ENCODE measurements at regions of chr11 and their contacts with region 1.

Region 1: GRCh38 chr11:10933455-10934292 is 75.8 kb upstream of the ZBED5 start:
- DNase-seq: peak; percentile 83 to 94 (median 92)
- H3K4me3 ChIP-seq: peak overlapping the region in 58 of 59 donors; percentile 17 to 69 (median 42)
- H3K27ac ChIP-seq: peak overlapping the region in 35 of 59 donors; percentile 6 to 96 (median 61)
- H3K27me3 ChIP-seq: no peaks in the 10 kb centered on the region
- CTCF ChIP-seq: peak; percentile 68 to 100 (median 98)

Region 2: DNA sequence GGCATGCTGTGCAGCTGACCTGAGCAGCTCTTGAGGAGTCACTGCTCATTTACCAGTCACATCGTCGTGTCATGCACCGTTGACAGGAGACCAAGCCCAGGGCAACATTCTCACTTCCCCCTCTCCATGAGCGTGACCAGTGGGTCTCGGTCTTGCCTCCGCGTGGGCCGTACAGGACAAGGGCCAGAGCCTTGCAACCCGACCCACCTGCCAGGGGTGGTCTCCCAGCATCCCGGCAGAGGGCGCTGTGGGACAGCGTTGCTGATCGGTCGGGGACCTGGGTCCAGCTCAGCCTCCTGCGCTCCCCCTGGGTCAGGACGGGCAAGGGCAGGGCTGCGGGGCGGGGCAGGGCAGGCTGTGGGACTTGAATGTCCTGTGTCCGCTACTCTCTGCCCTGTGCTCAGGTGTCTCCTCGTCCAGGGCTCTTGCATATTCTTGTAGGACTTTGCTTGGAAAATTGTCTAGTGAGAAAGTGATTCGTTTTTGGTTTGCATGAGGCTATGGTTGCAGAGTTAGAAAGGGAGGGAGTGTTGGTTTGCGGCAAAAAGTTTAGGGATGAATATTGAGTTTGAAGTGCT is 141.2 kb before region 1 on chr11:
- intact Hi-C with region 1: loop called in 1 of 2 experiments (anchors 5 kb)
- DNase-seq: peak; percentile 47 to 83 (median 68)
- H3K4me3 ChIP-seq: peak overlapping the region in 27 of 59 donors; percentile 4 to 51 (median 29)
- H3K27ac ChIP-seq: no peak overlapping the region
- H3K27me3 ChIP-seq: no peaks in the 10 kb centered on the region
- CTCF ChIP-seq: peak; percentile 33 to 91 (median 84)

Region 3: DNA sequence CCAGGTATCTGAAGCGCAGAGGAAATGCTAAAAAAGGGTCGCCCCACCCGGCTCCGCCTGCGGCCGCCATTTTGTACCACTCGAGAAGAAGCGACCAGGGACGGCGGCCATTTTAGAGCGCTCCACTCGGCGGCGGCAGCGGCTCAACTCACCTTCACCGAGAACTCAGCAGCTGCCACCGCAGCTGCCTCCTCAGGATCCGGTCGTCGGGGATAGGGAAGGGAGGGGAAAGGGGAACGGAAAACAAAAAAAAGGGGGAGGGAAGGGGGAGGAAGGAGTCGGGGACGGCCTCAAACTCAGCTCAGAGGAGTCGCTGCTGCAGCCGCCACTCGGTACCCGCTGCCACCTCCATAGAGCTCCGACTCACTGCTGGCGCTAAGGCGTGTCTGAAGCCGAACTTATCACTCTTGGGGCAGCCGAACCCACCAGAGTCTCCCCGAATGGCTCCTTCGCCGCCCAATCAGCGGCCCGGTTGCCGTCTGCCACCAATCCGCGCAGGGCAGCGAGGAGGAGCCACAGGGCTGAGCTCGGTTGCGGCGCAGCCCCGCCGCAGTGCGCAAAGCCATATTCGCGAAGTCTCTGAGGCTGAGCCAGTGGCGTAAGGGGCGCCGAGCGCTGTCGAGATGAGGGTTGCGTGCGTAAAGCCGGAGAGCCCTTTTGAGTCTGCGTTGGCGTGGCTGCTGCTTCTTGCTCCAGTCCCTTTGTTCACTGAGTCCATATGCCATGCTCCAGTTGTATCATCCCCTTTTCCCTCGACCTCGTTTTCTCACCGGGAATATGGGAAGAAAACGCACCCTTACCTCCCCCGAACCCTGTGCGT is 124.9 kb before region 1 on chr11 and contains the start of gene EIF4G2:
- intact Hi-C with region 1: loop called (anchors 2 kb)
- DNase-seq: peak; percentile 96 to 100 (median 99)
- H3K4me3 ChIP-seq: peak within 1 kb of the TSS; percentile 68 to 100 (median 94)
- H3K27ac ChIP-seq: peak within 1 kb of the TSS; percentile 92 to 100 (median 99)
- H3K27me3 ChIP-seq: no peaks in the 10 kb centered on the region
- CTCF ChIP-seq: peak in 28 of 56 donors; percentile 12 to 61 (median 27)
- total RNA-seq, gene EIF4G2: 452 to 826 (median 596) TPM

Region 4: DNA sequence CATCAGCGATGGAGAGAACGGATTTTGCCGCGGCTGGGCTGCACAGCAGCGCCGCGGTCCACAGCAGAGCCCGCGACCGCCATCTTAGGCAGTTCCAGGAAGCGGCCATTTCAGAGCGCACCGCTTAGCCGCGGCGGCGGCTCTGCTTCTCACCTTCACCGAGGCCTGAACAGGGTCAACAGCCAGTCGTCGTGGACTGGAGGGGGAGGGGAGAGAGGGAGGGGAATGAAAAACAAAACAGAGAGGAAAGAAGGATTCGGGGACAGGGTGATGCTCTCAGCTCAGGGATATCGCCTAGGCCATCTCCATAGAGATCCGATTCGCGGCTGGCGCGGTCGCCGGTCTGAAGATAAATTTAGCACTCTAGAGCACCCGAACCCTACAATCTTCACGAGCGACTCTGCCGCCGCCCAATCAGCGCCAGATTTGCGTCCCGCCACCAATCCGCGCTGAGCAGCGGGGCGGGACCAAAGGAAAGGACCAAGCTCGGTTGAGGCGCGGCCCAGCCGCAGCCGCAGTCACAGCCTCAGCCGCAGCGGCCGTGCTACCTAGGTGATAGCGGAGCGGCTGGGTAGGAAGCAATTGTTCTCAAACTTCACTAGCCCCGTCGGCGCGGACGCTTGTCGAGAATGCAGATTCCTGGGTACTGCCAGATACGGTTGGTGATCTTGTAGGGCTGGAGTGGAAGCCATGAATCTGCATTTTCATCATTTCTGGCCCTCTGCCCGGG is 75.8 kb before region 1 on chr11 and contains the start of gene ZBED5:
- intact Hi-C with region 1: loop called (anchors 2 to 5 kb)
- DNase-seq: peak; percentile 97 to 99 (median 98)
- H3K4me3 ChIP-seq: peak within 1 kb of the TSS; percentile 50 to 98 (median 86)
- H3K27ac ChIP-seq: peak within 1 kb of the TSS; percentile 94 to 100 (median 99)
- H3K27me3 ChIP-seq: no peaks in the 10 kb centered on the region
- CTCF ChIP-seq: peak in 24 of 56 donors; percentile 6 to 41 (median 20)
- total RNA-seq, gene ZBED5: 45.9 to 102 (median 63.1) TPM

Region 5: DNA sequence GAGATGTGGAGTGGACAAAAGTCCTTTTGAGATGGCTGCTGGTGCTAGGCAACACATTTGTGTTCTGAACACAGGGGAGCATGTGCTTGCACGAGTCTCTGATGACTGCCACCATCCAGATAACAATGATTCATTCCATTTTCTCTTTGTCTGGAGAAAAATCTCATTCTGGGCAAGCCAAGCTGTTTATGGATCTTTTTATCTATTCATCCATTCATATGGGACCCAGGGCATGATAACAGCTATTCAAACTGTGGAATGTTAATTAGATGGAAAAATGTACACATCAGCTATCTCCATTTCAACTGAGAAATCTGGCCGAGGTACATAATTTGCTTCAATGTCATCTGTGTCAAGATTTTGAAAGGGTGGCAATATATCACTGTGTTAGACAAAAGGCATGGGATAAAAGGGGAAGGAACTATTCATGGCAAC is 41.6 kb after region 1 on chr11:
- intact Hi-C with region 1: loop called in 1 of 2 experiments (anchors 5 kb)
- DNase-seq: peak in 2 of 10 donors; percentile 46 to 61
- H3K4me3 ChIP-seq: no peak overlapping the region
- H3K27ac ChIP-seq: peak overlapping the region in 44 of 59 donors; percentile 9 to 75 (median 52)
- H3K27me3 ChIP-seq: no peaks in the 10 kb centered on the region
- CTCF ChIP-seq: no peak

Region 6: GRCh38 chr11:11022125-11022730 is 88.6 kb after region 1 on chr11:
- intact Hi-C with region 1: loop called (anchors 2 kb)
- DNase-seq: no peak
- H3K4me3 ChIP-seq: no peak overlapping the region
- H3K27ac ChIP-seq: no peak overlapping the region
- H3K27me3 ChIP-seq: no peaks in the 10 kb centered on the region
- CTCF ChIP-seq: peak; percentile 29 to 78 (median 60)